Activated CD4-positive, alpha-beta T cell treated with anti-CD3 and anti-CD28 coated beads for 36 hours (primary cell): ENCODE measurements at regions of chr11 and their contacts with region 1.

Region 1: GRCh38 chr11:124837491-124837856 is 27.8 kb upstream of the ROBO3 start:
- DNase-seq: no peak
- ATAC-seq: peak; percentile 50
- H3K4me3 Mint-ChIP-seq: no peak overlapping the region
- H3K27ac Mint-ChIP-seq: no peak overlapping the region
- H3K4me1 Mint-ChIP-seq: peaks cover 15% of the 10 kb centered on the region
- H3K27me3 Mint-ChIP-seq: peaks cover 57% of the 10 kb centered on the region

Region 2: GRCh38 chr11:124415356-124415923 is 422.0 kb before region 1 on chr11:
- CTCF ChIA-PET with region 1: no interaction called
- POLR2A ChIA-PET with region 1: no interaction called
- intact Hi-C with region 1: loop called in 1 of 2 experiments (anchors 2 kb)
- DNase-seq: no peak
- ATAC-seq: no peak
- H3K4me3 Mint-ChIP-seq: no peak overlapping the region
- H3K27ac Mint-ChIP-seq: no peak overlapping the region
- H3K4me1 Mint-ChIP-seq: no peaks in the 10 kb centered on the region
- H3K27me3 Mint-ChIP-seq: peaks cover 8% of the 10 kb centered on the region

Region 3: GRCh38 chr11:124739479-124740276 is 97.8 kb before region 1 on chr11 and contains the start of gene NRGN:
- CTCF ChIA-PET with region 1: interaction called, 6 read pairs
- POLR2A ChIA-PET with region 1: no interaction called
- intact Hi-C with region 1: loop called in 1 of 2 experiments (anchors 1 kb)
- DNase-seq: peak; percentile 93
- ATAC-seq: peak; percentile 95
- H3K4me3 Mint-ChIP-seq: peak within 1 kb of the TSS; percentile 76
- H3K27ac Mint-ChIP-seq: peak within 1 kb of the TSS; percentile 17
- H3K4me1 Mint-ChIP-seq: peaks cover 9% of the 10 kb centered on the region
- H3K27me3 Mint-ChIP-seq: peaks cover 2% of the 10 kb centered on the region
- total RNA-seq, gene NRGN: 13.5 to 18.1 TPM

Region 4: GRCh38 chr11:124800226-124800929 is 37.1 kb before region 1 on chr11 and contains the start of gene MSANTD2:
- CTCF ChIA-PET with region 1: interaction called, 56 read pairs
- POLR2A ChIA-PET with region 1: interaction called, 3 read pairs
- intact Hi-C with region 1: loop called (anchors 1 kb)
- DNase-seq: peak; percentile 88
- ATAC-seq: peak; percentile 89
- H3K4me3 Mint-ChIP-seq: peak within 1 kb of the TSS; percentile 83
- H3K27ac Mint-ChIP-seq: peak within 1 kb of the TSS; percentile 95
- H3K4me1 Mint-ChIP-seq: peaks cover 36% of the 10 kb centered on the region
- H3K27me3 Mint-ChIP-seq: no peaks in the 10 kb centered on the region
- total RNA-seq, gene MSANTD2: 6.9 to 8.6 TPM

Region 5: GRCh38 chr11:124875943-124876817 is 38.7 kb after region 1 on chr11:
- CTCF ChIA-PET with region 1: interaction called, 12 read pairs
- POLR2A ChIA-PET with region 1: interaction called, 5 read pairs
- intact Hi-C with region 1: loop called in 1 of 2 experiments (anchors 1 kb)
- DNase-seq: peak; percentile 88
- ATAC-seq: peak; percentile 98
- H3K4me3 Mint-ChIP-seq: peak overlapping the region; percentile 77
- H3K27ac Mint-ChIP-seq: peak overlapping the region; percentile 58
- H3K4me1 Mint-ChIP-seq: peaks cover 16% of the 10 kb centered on the region
- H3K27me3 Mint-ChIP-seq: peaks cover 27% of the 10 kb centered on the region

Region 6: DNA sequence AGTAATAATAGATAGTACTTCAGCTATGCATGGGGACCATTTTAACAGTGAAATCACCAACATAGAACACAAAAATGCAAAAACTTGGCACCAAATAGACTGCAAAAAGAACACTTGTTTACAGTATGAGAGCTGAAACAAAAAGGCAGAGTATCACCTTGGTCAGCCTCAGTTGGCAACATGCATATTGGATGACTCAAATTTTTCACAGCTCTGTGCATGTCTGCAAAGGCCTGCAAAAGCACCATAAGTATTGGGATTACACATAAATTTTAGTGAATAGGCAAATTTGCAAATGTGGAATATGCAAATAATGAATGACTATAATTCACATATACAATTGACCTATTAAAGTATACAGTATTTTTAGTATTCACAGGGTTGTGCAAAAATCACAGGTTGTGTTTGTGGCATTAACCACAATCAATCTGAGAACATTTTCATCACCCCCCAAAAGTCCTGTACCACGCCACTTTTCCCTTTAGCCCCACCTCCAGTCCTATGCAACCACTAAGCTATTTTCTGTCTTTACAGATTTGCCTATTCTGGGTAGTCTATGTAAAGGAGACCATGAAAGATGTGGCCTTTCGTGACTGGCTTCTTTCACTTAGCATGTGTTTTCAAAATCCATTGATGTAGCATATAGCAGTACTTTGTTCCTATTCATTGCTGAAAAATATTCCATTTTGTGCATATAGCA is 163.8 kb after region 1 on chr11:
- CTCF ChIA-PET with region 1: no interaction called
- POLR2A ChIA-PET with region 1: no interaction called
- intact Hi-C with region 1: no loop called
- DNase-seq: no peak
- ATAC-seq: no peak
- H3K4me3 Mint-ChIP-seq: no peak overlapping the region
- H3K27ac Mint-ChIP-seq: no peak overlapping the region
- H3K4me1 Mint-ChIP-seq: no peaks in the 10 kb centered on the region
- H3K27me3 Mint-ChIP-seq: no peaks in the 10 kb centered on the region

Region 7: GRCh38 chr11:125141686-125142535 is 304.4 kb after region 1 on chr11:
- CTCF ChIA-PET with region 1: interaction called, 5 read pairs
- POLR2A ChIA-PET with region 1: no interaction called
- intact Hi-C with region 1: loop called (anchors 5 to 10 kb)
- DNase-seq: peak; percentile 74
- ATAC-seq: peak; percentile 80
- H3K4me3 Mint-ChIP-seq: no peak overlapping the region
- H3K27ac Mint-ChIP-seq: no peak overlapping the region
- H3K4me1 Mint-ChIP-seq: peaks cover 2% of the 10 kb centered on the region
- H3K27me3 Mint-ChIP-seq: peaks cover 15% of the 10 kb centered on the region

Region 8: GRCh38 chr11:125257190-125257579 is 419.7 kb after region 1 on chr11:
- CTCF ChIA-PET with region 1: no interaction called
- POLR2A ChIA-PET with region 1: no interaction called
- intact Hi-C with region 1: no loop called
- DNase-seq: no peak
- ATAC-seq: no peak
- H3K4me3 Mint-ChIP-seq: no peak overlapping the region
- H3K27ac Mint-ChIP-seq: no peak overlapping the region
- H3K4me1 Mint-ChIP-seq: no peaks in the 10 kb centered on the region
- H3K27me3 Mint-ChIP-seq: peaks cover 14% of the 10 kb centered on the region

Region 9: DNA sequence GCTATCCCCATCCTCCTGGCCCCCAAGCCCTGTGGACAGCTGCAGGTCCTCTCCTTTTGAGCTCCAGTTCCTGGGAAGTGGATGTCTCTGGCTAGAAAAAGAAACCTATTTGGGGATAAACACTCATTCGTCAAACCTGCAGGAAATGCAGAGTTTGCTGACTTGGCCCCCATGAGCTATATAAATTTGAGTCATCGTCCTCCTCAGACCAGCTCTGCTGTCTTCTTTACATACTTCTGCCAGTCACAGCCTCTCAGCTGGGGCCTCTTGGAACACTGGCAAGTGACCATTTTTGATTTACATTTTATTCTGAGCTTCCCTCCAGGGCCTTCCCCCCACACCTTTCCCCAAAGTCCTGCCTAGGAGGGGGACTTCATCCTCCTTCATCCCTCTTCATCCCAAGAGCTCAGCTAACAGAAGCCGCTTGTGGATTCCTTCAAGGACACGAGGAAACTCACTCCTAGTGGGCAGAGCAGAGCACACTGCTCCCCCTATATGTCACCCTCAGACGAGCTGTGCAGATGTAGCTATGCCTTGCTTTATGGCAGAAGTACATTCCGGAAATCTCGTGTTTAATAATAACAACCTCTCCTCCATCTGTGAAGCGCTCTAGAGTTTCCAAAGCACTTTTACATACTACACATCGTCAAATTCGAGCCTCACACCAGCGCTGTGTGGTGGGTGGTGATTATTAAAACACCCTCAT is 526.8 kb after region 1 on chr11:
- CTCF ChIA-PET with region 1: no interaction called
- POLR2A ChIA-PET with region 1: no interaction called
- intact Hi-C with region 1: no loop called
- DNase-seq: no peak
- ATAC-seq: no peak
- H3K4me3 Mint-ChIP-seq: no peak overlapping the region
- H3K27ac Mint-ChIP-seq: no peak overlapping the region
- H3K4me1 Mint-ChIP-seq: no peaks in the 10 kb centered on the region
- H3K27me3 Mint-ChIP-seq: no peaks in the 10 kb centered on the region